Endothelial cell of umbilical vein (primary cell): ENCODE measurements at regions of chr9 and their contacts with region 1.

Region 1: GRCh38 chr9:27065288-27065687 is 43.7 kb upstream of the TEK start:
- DNase-seq: peak; percentile 86
- H3K4me3 ChIP-seq: no peak overlapping the region
- H3K27ac ChIP-seq: peak overlapping the region; percentile 26
- H3K4me1 ChIP-seq: peaks cover 23% of the 10 kb centered on the region
- H3K27me3 ChIP-seq: no peaks in the 10 kb centered on the region
- CTCF ChIP-seq: no peak
- POLR2A ChIP-seq: no peak

Region 2: DNA sequence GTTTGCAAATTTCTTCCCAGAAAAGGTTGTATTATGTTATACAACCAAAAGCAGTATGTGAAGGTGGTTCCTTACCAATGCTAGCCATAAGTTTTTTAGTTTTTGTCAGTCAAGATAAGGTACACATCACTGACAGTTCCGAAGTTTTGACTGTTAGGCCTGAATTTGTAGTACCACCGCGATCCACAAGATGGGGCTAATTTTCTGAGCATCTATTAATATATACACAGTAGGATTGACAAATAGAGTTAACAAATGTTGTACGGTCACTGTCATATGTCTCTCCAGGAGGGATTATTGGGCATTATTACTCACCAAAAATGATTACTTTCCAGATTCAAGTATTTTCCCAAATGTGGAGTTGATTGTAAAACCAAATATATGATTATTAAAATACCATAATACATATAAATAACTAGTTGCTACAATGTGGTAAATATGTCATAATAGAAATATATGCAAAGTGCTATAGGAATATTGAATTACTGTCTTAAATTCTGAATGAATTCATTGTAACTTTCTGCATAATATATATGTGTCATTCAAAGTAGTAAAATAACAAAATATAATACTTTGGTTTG is 31.4 kb before region 1 on chr9:
- CTCF ChIA-PET with region 1: no interaction called
- POLR2A ChIA-PET with region 1: no interaction called
- dilution Hi-C with region 1: no loop called
- intact Hi-C with region 1: no loop called
- DNase-seq: peak; percentile 78
- H3K4me3 ChIP-seq: no peak overlapping the region
- H3K27ac ChIP-seq: no peak overlapping the region
- H3K4me1 ChIP-seq: no peaks in the 10 kb centered on the region
- H3K27me3 ChIP-seq: no peaks in the 10 kb centered on the region
- CTCF ChIP-seq: peak; percentile 60 to 62
- POLR2A ChIP-seq: no peak

Region 3: DNA sequence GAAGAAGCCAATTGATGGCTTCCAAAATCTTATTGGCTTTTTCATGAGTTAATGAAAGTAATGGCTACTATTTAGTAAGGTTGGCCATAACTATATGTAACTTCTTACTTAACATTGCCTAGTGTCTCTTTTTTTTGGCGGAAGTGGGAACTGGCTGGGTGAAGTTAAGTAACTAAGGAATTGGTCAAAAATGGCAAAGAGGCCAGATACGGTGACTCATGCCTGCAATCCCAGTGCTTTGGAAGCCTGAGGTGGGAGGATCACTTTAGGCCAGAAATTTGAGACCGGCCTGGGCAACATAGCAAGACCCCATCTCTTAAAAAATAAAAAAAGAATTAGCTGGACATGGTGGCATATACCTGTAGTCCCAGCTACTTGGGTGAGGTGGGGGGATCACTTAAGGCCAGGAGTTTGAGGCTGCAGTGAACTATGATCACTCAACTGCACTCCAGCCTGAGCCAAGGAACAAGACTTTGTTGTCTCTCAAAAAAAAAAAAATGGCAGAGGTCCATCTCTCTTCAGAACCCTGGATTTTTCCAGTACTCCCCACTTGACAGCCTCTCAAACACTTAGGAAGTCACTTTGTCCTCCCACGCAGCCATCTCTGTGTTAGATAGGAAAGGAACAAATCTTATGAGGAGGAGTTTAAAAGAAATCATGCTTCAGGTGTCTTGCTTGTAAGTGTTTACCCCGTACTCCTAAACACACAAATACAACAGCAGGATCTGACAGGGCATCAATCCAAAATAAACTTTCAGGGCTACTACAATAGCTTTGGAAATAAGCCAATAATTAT is 119.5 kb after region 1 on chr9:
- CTCF ChIA-PET with region 1: no interaction called
- POLR2A ChIA-PET with region 1: no interaction called
- dilution Hi-C with region 1: no loop called
- intact Hi-C with region 1: loop called (anchors 1 kb)
- DNase-seq: peak; percentile 92
- H3K4me3 ChIP-seq: no peak overlapping the region
- H3K27ac ChIP-seq: peak overlapping the region; percentile 36
- H3K4me1 ChIP-seq: peaks cover 39% of the 10 kb centered on the region
- H3K27me3 ChIP-seq: no peaks in the 10 kb centered on the region
- CTCF ChIP-seq: no peak
- POLR2A ChIP-seq: no peak